Activated CD8-positive, alpha-beta memory T cell treated with anti-CD3 and anti-CD28 coated beads, Interleukin-2, amount 10 ng/mL, durations not matched to agents 7 days and 5 days (primary cell): ENCODE measurements at regions of chr7 and their contacts with region 1.

Region 1: DNA sequence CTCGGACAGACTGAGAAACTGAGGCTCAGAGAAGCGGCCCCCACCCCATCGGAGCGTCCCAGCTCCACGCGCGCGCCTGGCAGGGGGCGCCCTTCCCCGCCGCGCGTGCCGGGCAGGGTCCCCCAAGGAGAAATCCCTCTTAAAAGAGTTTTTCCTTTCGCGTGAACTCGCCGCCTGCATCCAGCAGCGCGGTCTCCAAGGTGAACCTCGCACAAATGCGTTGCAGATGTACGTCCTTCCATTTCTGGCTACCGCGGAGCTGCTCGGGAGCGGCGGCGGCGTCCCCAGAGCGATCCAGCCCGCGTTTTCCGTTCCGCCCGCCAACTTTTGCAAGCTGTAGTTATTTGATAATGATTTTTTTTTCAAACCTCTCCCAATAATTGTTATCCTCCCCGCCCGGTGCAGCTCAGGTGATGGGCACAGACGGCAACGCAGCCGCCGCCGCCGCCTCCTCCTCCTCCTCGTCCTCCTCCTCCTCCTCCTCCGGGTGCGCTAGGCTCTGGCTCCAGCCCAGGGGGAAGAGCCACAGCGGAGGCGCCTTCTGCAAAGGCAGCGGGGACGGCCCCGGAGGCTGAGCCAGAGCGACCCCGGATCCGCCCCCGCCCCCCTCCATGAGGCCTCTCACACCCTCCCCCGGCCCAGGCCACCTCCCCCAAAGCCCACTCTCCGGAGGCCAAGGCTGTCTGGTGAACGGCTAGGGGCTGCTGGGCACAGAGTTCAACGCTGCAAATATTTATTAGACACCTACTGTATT is 74.0 kb upstream of the CUX1 start:
- DNase-seq: peak; percentile 77
- ATAC-seq: peak; percentile 74
- H3K4me3 Mint-ChIP-seq: peak overlapping the region; percentile 78
- H3K27ac Mint-ChIP-seq: peak overlapping the region; percentile 63
- H3K4me1 Mint-ChIP-seq: peaks cover 56% of the 10 kb centered on the region
- H3K27me3 Mint-ChIP-seq: no peaks in the 10 kb centered on the region

Region 2: DNA sequence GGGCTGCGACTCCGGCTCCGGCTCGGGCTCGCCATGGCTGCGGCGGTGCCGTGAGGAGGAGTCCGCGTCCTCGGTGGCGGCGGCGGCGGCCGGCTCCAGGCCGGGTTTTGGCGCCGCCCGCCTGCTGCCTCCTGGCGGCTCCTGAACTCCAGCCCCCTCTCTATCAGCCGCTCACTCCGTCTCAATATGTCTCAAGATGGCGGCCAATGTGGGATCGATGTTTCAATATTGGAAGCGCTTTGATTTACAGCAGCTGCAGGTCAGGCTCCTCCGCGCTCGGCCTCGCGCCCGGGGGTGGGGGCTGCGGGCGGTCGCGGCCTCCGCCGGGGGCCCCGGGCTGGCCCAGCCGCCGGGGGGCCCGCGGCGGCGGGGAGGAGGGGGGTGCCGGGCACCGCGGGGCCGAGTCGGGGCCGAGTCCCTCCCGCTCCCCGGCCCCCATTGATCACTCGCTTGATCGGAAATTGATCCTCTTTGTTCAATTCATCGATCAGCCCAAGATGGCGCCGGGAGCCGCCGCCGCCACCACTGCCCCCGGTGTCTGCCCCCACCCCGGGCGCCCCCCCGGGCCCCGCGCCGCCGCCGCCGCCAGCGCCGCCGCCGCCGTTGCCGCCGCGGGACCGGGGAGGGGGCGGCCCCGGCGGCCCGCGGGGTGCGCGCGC is 72.5 kb after region 1 on chr7:
- CTCF ChIA-PET with region 1: interaction called, 26 read pairs
- DNase-seq: peak; percentile 78
- ATAC-seq: peak; percentile 77
- H3K4me3 Mint-ChIP-seq: peak overlapping the region; percentile 66
- H3K27ac Mint-ChIP-seq: peak overlapping the region; percentile 49
- H3K4me1 Mint-ChIP-seq: peaks cover 10% of the 10 kb centered on the region
- H3K27me3 Mint-ChIP-seq: peaks cover 37% of the 10 kb centered on the region